Head of caudate nucleus (tissue), 42 donors: ENCODE measurements at regions of chr17 and their contacts with region 1.

Region 1: GRCh38 chr17:46212634-46213435 is 19.6 kb upstream of the KANSL1 start:
- DNase-seq: peak in 37 of 42 donors; percentile 22 to 91 (median 70)

Region 2: DNA sequence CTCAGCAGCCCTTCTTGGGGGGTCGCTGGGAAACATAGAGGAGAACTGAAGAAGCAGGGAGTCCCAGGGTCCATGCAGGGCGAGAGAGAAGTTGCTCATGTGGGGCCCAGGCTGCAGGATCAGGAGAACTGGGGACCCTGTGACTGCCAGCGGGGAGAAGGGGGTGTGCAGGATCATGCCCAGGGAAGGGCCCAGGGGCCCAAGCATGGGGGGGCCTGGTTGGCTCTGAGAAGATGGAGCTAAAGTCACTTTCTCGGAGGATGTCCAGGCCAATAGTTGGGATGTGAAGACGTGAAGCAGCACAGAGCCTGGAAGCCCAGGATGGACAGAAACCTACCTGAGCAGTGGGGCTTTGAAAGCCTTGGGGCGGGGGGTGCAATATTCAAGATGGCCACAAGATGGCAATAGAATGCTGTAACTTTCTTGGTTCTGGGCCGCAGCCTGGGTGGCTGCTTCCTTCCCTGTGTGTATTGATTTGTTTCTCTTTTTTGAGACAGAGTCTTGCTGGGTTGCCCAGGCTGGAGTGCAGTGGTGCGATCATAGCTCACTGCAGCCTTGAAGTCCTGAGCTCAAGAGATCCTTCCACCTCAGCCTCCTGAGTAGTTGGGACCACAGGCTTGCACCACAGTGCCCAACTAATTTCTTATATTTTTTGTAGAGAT is 210.4 kb before region 1 on chr17:
- intact Hi-C with region 1: loop called (anchors 2 kb)
- DNase-seq: peak; percentile 43 to 91 (median 76)

Region 3: DNA sequence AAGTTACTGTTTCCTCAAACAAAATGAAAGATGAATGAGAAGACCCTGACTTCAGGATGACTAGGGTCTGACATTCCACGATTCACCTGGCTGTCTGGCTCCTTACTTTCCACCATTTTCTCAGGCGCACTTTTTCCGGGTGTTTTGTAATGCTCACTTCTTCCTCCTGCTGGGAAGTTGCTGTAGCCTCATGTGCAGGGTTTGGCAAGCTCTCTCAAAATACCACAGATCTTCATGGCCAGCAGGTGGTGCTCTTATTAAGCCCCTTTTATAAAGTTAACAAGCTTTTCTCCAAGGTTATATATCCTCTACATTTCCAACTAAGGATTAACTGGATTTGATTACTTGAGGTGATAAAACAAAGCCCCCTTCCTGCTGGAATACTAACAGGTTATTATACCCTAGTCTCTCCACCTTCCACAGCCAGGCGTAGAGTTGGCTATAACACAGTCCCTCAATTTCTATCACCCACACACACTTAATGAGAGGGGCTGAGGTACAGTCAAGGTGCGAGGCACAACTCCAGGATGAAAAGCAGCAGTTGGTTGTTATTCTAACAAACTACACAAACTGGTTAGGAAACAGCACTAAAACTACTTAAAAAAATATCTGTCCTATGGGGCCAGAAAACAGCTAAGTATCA is 168.4 kb before region 1 on chr17:
- intact Hi-C with region 1: loop called (anchors 5 kb)
- DNase-seq: peak in 38 of 42 donors; percentile 29 to 92 (median 77)

Region 4: GRCh38 chr17:46157443-46158062 is 55.3 kb before region 1 on chr17:
- intact Hi-C with region 1: no loop called
- DNase-seq: no peak

Region 5: GRCh38 chr17:46184696-46185095 is 28.1 kb before region 1 on chr17:
- intact Hi-C with region 1: no loop called
- DNase-seq: no peak

Region 6: DNA sequence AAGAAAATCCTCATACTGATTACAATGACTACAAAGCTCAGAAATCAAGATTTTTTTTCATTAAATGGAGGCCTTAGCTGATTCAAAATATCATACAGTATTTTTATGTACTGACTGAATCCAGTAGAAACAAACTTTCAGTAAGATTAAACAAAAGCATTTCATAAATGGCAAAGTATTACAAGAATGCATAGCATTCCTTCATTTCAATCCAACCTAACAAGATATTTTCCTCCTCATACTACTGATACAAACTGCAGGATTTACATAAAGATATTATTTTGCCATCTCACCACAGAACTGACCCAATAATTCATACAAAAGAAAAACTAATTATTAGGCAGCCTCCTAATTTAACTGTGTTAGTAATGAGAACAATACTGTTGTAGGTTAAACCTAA is 13.5 kb before region 1 on chr17:
- intact Hi-C with region 1: loop called (anchors 2 kb)
- DNase-seq: no peak